GM10248 (cell line): ENCODE measurements at regions of chr5 and their contacts with region 1.

Region 1: DNA sequence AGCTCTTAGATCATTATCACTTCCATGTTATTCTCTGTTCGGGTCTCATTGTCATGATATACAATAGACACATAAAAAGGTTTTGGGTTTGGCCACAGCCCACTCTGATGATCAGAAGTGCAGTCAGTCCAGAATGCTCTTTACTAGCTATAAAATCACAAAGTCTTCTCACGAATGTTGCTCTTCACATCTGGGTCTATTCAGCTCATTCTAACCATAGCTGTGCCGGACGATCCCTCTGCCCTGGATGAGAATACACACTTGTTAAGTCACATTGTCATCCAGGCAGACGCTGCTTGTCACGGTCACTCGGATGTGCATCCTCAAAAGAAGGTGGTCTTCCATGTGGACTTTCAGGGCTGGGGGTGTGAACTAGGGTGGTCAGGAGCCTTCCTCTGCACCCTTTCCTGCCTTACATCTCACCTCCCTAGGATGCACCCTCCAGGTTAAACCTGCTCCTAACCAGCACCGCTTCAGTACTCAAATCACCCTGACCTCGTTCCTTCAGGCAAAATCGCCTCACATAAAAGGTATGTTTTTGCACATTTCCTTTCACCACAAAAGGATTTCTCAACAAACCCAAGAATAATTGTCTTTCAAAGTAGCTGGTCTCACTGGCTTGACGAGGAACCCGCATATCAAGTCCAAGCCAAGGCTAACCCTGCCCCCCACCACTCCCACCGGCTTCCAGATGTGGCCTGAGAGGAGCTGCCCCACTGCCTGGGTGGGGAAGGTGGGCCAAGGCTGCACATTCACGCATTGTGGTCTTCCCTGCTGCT is 21.9 kb downstream of the ANKH start:
- DNase-seq: no peak
- CTCF ChIP-seq: no peak

Region 2: GRCh38 chr5:14428302-14429081 is 421.2 kb before region 1 on chr5:
- CTCF ChIA-PET with region 1: no interaction called
- POLR2A ChIA-PET with region 1: no interaction called
- DNase-seq: no peak
- CTCF ChIP-seq: no peak

Region 3: GRCh38 chr5:14861123-14861765 is 11.5 kb after region 1 on chr5:
- CTCF ChIA-PET with region 1: interaction called, 13 read pairs
- POLR2A ChIA-PET with region 1: no interaction called
- DNase-seq: no peak
- CTCF ChIP-seq: no peak

Region 4: GRCh38 chr5:14925326-14925725 is 75.6 kb after region 1 on chr5:
- CTCF ChIA-PET with region 1: no interaction called
- POLR2A ChIA-PET with region 1: no interaction called
- DNase-seq: no peak
- CTCF ChIP-seq: no peak